Endothelial cell of umbilical vein (primary cell): ENCODE measurements at regions of chr2 and their contacts with region 1.

Region 1: DNA sequence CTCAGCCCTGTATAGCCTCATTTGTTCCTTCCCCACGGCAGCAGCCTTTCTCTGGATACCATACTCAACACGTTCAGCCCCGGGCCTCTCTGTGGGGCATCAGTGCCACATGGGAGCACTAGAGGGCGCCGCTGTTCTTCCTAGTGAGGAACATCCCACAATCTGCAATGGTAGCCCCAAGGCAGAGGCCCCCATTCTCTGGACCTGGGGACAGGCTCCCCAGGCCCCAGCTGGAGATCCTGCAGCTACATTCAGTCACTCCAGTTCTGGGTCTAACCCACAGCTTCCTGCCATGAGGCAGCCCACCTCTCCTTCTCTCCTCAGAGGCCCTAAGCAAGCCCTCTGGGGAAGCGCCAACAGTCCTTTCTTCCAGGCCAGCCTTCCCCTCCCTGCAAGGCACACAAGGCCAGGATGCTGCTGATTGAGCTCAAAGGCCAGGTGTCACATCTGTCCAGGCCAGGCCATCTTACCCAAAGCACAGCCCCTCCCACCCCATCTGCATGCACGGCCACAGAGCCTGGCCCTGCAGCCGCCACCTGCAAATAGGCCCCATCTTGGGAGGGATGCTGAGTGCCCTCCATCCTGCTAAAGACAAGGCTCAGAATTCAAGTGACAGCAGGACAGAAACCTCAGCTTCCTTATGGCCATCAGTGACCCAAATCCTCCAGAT is 14.3 kb upstream of the SFXN5 start:
- DNase-seq: peak; percentile 76
- H3K4me3 ChIP-seq: no peak overlapping the region
- H3K27ac ChIP-seq: no peak overlapping the region
- H3K4me1 ChIP-seq: peaks cover 31% of the 10 kb centered on the region
- H3K27me3 ChIP-seq: no peaks in the 10 kb centered on the region
- CTCF ChIP-seq: peak; percentile 95 to 96
- POLR2A ChIP-seq: no peak

Region 2: GRCh38 chr2:73071360-73072133 is 14.3 kb before region 1 on chr2 and contains the start of gene SFXN5:
- CTCF ChIA-PET with region 1: interaction called, 4 read pairs
- POLR2A ChIA-PET with region 1: no interaction called
- dilution Hi-C with region 1: no loop called
- intact Hi-C with region 1: loop called (anchors 1 kb)
- DNase-seq: peak; percentile 94
- H3K4me3 ChIP-seq: peak within 1 kb of the TSS; percentile 77 to 86 (median 80)
- H3K27ac ChIP-seq: peak within 1 kb of the TSS; percentile 75
- H3K4me1 ChIP-seq: peaks cover 12% of the 10 kb centered on the region
- H3K27me3 ChIP-seq: no peaks in the 10 kb centered on the region
- CTCF ChIP-seq: peak in 1 of 2 donors; percentile 23
- POLR2A ChIP-seq: peak; percentile 71
- total RNA-seq, gene SFXN5: 24.6 and 28.6 TPM in 2 replicates

Region 3: GRCh38 chr2:73112913-73113633 is 27.2 kb after region 1 on chr2 and contains the start of gene RAB11FIP5:
- CTCF ChIA-PET with region 1: interaction called, 69 read pairs
- POLR2A ChIA-PET with region 1: no interaction called
- dilution Hi-C with region 1: no loop called
- intact Hi-C with region 1: loop called (anchors 1 kb)
- DNase-seq: peak; percentile 70
- H3K4me3 ChIP-seq: peak within 1 kb of the TSS; percentile 73 to 76 (median 74)
- H3K27ac ChIP-seq: peak within 1 kb of the TSS; percentile 60
- H3K4me1 ChIP-seq: peaks cover 16% of the 10 kb centered on the region
- H3K27me3 ChIP-seq: no peaks in the 10 kb centered on the region
- CTCF ChIP-seq: no peak
- POLR2A ChIP-seq: peak; percentile 55
- total RNA-seq, gene RAB11FIP5: 47.0 and 49.4 TPM in 2 replicates

Region 4: DNA sequence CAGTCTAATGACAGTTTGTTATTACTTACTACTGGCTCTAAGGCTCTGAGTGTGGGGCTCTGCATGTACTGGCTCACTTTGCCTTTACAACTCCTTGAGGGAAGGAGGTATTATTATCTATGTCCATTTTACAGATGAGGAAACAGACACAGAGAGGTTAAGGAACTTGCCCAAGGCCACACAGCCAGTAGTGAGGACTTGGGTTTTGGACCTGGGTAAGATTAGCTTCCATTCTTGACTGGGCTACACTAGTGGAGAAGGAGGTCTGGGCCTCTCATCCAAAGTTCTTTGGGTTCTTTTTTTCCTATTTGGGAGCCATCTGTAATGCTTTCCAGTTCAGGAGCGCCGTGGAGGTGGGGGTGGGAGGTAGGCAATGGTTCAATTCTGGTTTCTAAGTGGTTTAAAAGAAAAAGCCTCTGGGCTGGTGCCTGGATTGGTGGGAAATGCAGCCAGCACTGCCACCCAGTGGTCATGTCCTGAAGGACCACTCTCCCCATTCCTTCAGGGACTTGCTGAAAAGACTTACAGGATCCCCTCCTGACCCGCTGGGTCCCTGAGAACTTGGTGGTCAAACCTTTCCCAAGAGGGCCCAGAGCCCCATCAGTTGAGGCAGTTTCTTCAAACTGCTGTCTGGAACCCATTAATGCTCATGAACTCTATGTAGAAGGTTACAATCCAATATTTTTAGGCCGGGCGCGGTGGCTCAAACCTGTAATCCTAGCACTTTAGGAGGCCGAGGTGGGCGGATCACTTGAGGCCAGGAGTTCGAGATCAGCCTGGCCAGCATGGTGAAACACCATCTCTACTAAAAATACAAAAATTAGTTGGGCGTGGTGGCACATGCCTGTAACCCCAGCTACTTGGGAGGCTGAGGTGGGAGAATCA is 77.9 kb after region 1 on chr2:
- CTCF ChIA-PET with region 1: interaction called, 208 read pairs
- POLR2A ChIA-PET with region 1: no interaction called
- dilution Hi-C with region 1: no loop called
- intact Hi-C with region 1: no loop called
- DNase-seq: peak; percentile 84
- H3K4me3 ChIP-seq: no peak overlapping the region
- H3K27ac ChIP-seq: no peak overlapping the region
- H3K4me1 ChIP-seq: peaks cover 2% of the 10 kb centered on the region
- H3K27me3 ChIP-seq: no peaks in the 10 kb centered on the region
- CTCF ChIP-seq: peak; percentile 86 to 89
- POLR2A ChIP-seq: no peak